H1 (cell line): ENCODE measurements at regions of chr9 and their contacts with region 1.

Region 1: DNA sequence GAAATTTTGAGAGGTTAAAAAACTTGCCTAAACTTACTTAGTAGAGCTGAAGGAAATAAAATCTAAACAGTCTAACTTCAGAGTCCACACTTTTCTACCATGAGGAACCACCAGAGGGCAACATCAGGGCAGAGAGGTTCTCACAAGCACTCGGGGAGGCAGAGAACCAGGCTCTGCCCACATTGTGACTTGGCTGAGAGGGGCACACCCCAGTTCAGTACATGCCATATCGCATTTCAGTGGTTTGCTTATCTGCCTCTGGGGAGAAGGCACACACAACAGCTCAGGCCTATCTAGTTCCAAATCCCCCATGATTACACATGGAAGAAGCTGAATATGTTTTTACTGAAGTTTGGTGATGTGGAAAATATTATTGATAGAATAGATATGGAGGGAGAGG is 49.2 kb downstream of the EQTN start:
- DNase-seq: peak; percentile 25 to 56
- H3K4me3 ChIP-seq: no peak overlapping the region
- H3K27ac ChIP-seq: no peak overlapping the region
- H3K4me1 ChIP-seq: no peaks in the 10 kb centered on the region; a peak in 1 of 7 replicates
- H3K27me3 ChIP-seq: no peaks in the 10 kb centered on the region
- CTCF ChIP-seq: peak; percentile 54 to 88 (median 76)
- EP300 ChIP-seq: no peak
- POLR2A ChIP-seq: no peak
- RAD21 ChIP-seq: peak; percentile 73 to 81

Region 2: GRCh38 chr9:27194401-27195091 is 53.2 kb before region 1 on chr9:
- CTCF ChIA-PET with region 1: no interaction called
- POLR2A ChIA-PET with region 1: no interaction called
- DNase-seq: no peak
- H3K4me3 ChIP-seq: no peak overlapping the region
- H3K27ac ChIP-seq: no peak overlapping the region
- H3K4me1 ChIP-seq: no peaks in the 10 kb centered on the region
- H3K27me3 ChIP-seq: no peaks in the 10 kb centered on the region; a peak in 1 of 7 replicates
- CTCF ChIP-seq: no peak
- EP300 ChIP-seq: no peak
- POLR2A ChIP-seq: no peak
- RAD21 ChIP-seq: no peak

Region 3: GRCh38 chr9:27261517-27262211 is 13.9 kb after region 1 on chr9:
- CTCF ChIA-PET with region 1: interaction called, 39 read pairs
- POLR2A ChIA-PET with region 1: interaction called, 3 read pairs
- DNase-seq: no peak
- H3K4me3 ChIP-seq: no peak overlapping the region
- H3K27ac ChIP-seq: no peak overlapping the region
- H3K4me1 ChIP-seq: peaks cover 0 to 5% (median 0%) of the 10 kb centered on the region in 4 experiments; a peak in 2 of 7 replicates
- H3K27me3 ChIP-seq: no peaks in the 10 kb centered on the region
- CTCF ChIP-seq: no peak
- EP300 ChIP-seq: no peak
- POLR2A ChIP-seq: no peak
- RAD21 ChIP-seq: no peak

Region 4: DNA sequence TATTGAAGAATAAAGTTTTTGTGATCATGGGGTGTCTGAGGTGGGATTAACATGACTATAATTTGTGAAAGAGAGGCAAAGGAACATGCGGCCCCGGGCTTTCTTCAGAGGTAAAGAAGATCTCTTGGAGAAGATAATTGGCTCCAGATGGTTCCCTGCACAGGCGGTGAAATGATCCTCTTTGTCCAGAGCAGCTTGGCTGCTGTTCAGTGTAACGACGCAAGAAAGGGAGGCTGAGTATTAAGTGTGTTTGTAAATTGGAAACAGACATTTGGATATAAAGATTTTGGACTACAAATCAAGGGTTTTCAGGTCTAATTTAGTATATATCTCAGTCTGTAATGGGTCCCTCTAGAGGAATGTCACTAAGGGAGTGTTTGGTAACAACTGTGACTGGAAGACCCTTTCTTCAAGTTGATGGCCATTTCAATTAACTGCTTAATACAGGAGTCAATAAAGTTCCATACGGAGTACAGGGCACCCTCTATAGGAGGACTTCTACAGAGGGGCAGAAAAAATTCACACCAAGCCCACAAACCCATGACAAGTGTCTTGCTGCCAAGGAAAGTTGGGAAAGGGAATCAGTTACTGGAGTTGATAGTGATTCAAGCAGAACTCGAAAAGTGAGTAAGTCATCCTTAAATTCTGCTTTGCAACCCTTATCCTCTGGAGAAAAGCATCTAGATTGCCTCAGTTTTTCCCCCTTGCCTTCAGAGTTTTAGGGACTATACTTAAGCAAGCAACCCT is 45.1 kb after region 1 on chr9:
- CTCF ChIA-PET with region 1: no interaction called
- POLR2A ChIA-PET with region 1: no interaction called
- DNase-seq: no peak
- H3K4me3 ChIP-seq: no peak overlapping the region
- H3K27ac ChIP-seq: no peak overlapping the region
- H3K4me1 ChIP-seq: no peaks in the 10 kb centered on the region
- H3K27me3 ChIP-seq: no peaks in the 10 kb centered on the region
- CTCF ChIP-seq: no peak
- EP300 ChIP-seq: no peak
- POLR2A ChIP-seq: no peak
- RAD21 ChIP-seq: no peak